ENCODE measurements at regions of chr3 and their contacts with region 1.

Region 1: GRCh38 chr3:138347960-138348753 is at the start of gene MRAS:
- DNase-seq: peak; percentile 82 to 91 (median 89)
- ATAC-seq: peak; percentile 33 to 89 (median 72)
- H3K4me3 ChIP-seq: peak within 1 kb of the TSS; percentile 72 to 97 (median 83)
- H3K27ac ChIP-seq: peak within 1 kb of the TSS; percentile 89 to 99 (median 96)
- H3K4me1 ChIP-seq: peaks cover 0 to 45% (median 30%) of the 10 kb centered on the region in 12 donors
- H3K27me3 ChIP-seq: peaks cover 0 to 3% (median 0%) of the 10 kb centered on the region in 9 donors
- CTCF ChIP-seq: peak; percentile 15 to 69 (median 46)
- POLR2A ChIP-seq: peak; percentile 85 to 99
- total RNA-seq, gene MRAS: 227 to 413 (median 254) TPM

Region 2: GRCh38 chr3:138381950-138382688 is 34.0 kb after region 1 on chr3:
- intact Hi-C with region 1: loop called in 1 of 10 experiments (anchors 5 kb)
- DNase-seq: peak; percentile 58 to 85 (median 81)
- ATAC-seq: peak; percentile 80 to 91 (median 84)
- H3K4me3 ChIP-seq: no peak overlapping the region
- H3K27ac ChIP-seq: peak overlapping the region; percentile 66 to 96 (median 90)
- H3K4me1 ChIP-seq: peaks cover 9 to 78% (median 45%) of the 10 kb centered on the region in 12 donors
- H3K27me3 ChIP-seq: no peaks in the 10 kb centered on the region
- CTCF ChIP-seq: no peak
- POLR2A ChIP-seq: no peak

Region 3: GRCh38 chr3:138417559-138417982 is 69.4 kb after region 1 on chr3:
- intact Hi-C with region 1: no loop called
- DNase-seq: peak; percentile 72 to 85 (median 76)
- ATAC-seq: peak; percentile 65 to 86 (median 85)
- H3K4me3 ChIP-seq: no peak overlapping the region
- H3K27ac ChIP-seq: no peak overlapping the region
- H3K4me1 ChIP-seq: peaks cover 0 to 18% (median 5%) of the 10 kb centered on the region in 12 donors
- H3K27me3 ChIP-seq: no peaks in the 10 kb centered on the region
- CTCF ChIP-seq: peak; percentile 82 to 99 (median 89)
- POLR2A ChIP-seq: no peak

Measured in heart left ventricle (tissue), 16 donors.